SK-N-SH (cell line): ENCODE measurements at regions of chr14 and their contacts with region 1.

Region 1: GRCh38 chr14:81990312-81990761 is 456.7 kb upstream of the SEL1L start:
- DNase-seq: peak; percentile 6
- H3K4me3 ChIP-seq: no peak overlapping the region; a peak in 1 of 4 replicates
- H3K27ac ChIP-seq: no peak overlapping the region
- H3K4me1 ChIP-seq: no peaks in the 10 kb centered on the region
- H3K27me3 ChIP-seq: no peaks in the 10 kb centered on the region
- CTCF ChIP-seq: peak; percentile 84
- EP300 ChIP-seq: no peak
- RAD21 ChIP-seq: peak; percentile 89

Region 2: GRCh38 chr14:81772381-81772780 is 218.0 kb before region 1 on chr14:
- CTCF ChIA-PET with region 1: no interaction called
- POLR2A ChIA-PET with region 1: no interaction called
- DNase-seq: no peak
- H3K4me3 ChIP-seq: no peak overlapping the region
- H3K27ac ChIP-seq: no peak overlapping the region
- H3K4me1 ChIP-seq: no peaks in the 10 kb centered on the region
- H3K27me3 ChIP-seq: no peaks in the 10 kb centered on the region
- CTCF ChIP-seq: no peak
- EP300 ChIP-seq: no peak
- RAD21 ChIP-seq: no peak

Region 3: GRCh38 chr14:82003426-82003825 is 13.1 kb after region 1 on chr14:
- CTCF ChIA-PET with region 1: interaction called, 12 read pairs
- POLR2A ChIA-PET with region 1: no interaction called
- DNase-seq: no peak
- H3K4me3 ChIP-seq: no peak overlapping the region
- H3K27ac ChIP-seq: no peak overlapping the region
- H3K4me1 ChIP-seq: no peaks in the 10 kb centered on the region
- H3K27me3 ChIP-seq: no peaks in the 10 kb centered on the region
- CTCF ChIP-seq: no peak
- EP300 ChIP-seq: no peak
- RAD21 ChIP-seq: no peak

Region 4: DNA sequence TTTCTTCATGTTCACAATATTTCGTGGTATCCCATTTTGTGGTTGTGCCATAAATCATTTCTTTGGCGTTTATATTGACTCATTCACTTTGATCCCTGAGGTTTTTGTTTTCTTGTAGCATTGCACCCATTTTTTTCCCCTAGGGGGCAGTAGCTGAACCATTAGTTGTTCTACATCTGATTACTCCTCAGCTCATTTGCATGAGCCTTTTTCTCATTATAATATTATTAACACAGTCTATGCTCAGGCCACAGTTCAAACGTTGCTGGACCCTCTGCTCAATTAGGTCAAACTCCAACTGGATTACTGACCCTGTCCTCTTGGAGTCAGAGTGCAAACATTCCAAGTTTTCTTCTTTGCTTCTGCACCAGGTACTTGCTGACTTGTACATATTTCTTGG is 18.7 kb after region 1 on chr14:
- CTCF ChIA-PET with region 1: interaction called, 12 read pairs
- POLR2A ChIA-PET with region 1: no interaction called
- DNase-seq: peak; percentile 7
- H3K4me3 ChIP-seq: no peak overlapping the region
- H3K27ac ChIP-seq: no peak overlapping the region
- H3K4me1 ChIP-seq: no peaks in the 10 kb centered on the region
- H3K27me3 ChIP-seq: no peaks in the 10 kb centered on the region
- CTCF ChIP-seq: peak; percentile 24; the same call in 1 of the 2 replicates
- EP300 ChIP-seq: no peak
- RAD21 ChIP-seq: no peak

Region 5: GRCh38 chr14:82104013-82104412 is 113.7 kb after region 1 on chr14:
- CTCF ChIA-PET with region 1: no interaction called
- POLR2A ChIA-PET with region 1: no interaction called
- DNase-seq: no peak
- H3K4me3 ChIP-seq: no peak overlapping the region
- H3K27ac ChIP-seq: no peak overlapping the region
- H3K4me1 ChIP-seq: no peaks in the 10 kb centered on the region
- H3K27me3 ChIP-seq: no peaks in the 10 kb centered on the region
- CTCF ChIP-seq: no peak
- EP300 ChIP-seq: no peak
- RAD21 ChIP-seq: no peak